Left lung (tissue), 14 donors: ENCODE measurements at regions of chr6 and their contacts with region 1.

Region 1: DNA sequence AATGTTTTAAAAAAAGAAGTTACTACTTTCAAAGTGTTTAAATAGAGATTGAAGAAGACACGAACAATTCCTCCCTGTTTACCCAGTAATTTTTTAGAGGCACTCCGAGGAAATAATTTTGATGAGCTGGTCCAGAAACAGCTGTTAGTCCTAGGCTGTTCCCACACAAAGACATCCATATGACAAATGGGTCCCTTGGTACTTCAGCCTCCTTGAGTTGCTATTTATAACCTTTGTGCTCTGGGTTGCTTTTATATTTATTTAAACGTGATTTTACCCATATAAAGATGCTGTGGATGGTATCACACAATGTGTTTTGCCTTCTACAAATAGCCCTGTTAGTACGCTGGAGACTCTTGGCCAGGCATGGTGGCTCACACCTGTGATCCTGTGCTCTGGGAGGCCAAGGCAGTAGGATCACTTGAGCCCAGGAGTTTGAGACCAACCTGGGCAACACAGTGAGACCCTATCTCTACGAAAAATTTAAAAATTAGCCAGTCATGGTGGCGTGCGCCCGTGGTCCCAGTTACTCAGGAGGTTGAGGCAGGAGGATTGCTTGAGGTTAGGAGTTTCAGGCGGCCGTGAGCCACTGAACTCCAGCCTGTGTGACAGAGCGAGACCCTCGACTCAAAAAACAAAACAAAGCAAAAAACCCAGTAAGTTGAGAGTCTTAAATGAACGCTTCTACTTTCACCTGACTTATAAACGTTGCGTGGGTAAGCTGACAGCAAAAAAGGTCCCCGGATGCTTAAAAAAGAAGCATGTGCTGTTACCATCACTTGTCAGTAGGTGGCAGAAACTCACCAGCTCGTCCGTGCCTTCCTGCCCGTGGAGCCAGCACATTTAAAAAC is 56.9 kb upstream of the ARMH2 start:
- DNase-seq: peak in 2 of 4 donors; percentile 58 to 78
- ATAC-seq: peak; percentile 88
- H3K4me3 ChIP-seq: no peak overlapping the region
- H3K27ac ChIP-seq: peak overlapping the region in 1 of 2 donors; percentile 92
- H3K4me1 ChIP-seq: peaks cover 5 to 47% of the 10 kb centered on the region in 2 donors
- H3K27me3 ChIP-seq: no peaks in the 10 kb centered on the region
- CTCF ChIP-seq: peak; percentile 75 to 82

Region 2: GRCh38 chr6:25017932-25018567 is 162.4 kb after region 1 on chr6:
- intact Hi-C with region 1: loop called in 1 of 2 experiments (anchors 10 kb)
- DNase-seq: peak in 3 of 4 donors; percentile 33 to 80 (median 79)
- ATAC-seq: peak; percentile 91
- H3K4me3 ChIP-seq: no peak overlapping the region
- H3K27ac ChIP-seq: peak overlapping the region; percentile 64 to 71
- H3K4me1 ChIP-seq: peaks cover 11 to 53% of the 10 kb centered on the region in 2 donors
- H3K27me3 ChIP-seq: no peaks in the 10 kb centered on the region
- CTCF ChIP-seq: peak; percentile 58 to 73

Region 3: DNA sequence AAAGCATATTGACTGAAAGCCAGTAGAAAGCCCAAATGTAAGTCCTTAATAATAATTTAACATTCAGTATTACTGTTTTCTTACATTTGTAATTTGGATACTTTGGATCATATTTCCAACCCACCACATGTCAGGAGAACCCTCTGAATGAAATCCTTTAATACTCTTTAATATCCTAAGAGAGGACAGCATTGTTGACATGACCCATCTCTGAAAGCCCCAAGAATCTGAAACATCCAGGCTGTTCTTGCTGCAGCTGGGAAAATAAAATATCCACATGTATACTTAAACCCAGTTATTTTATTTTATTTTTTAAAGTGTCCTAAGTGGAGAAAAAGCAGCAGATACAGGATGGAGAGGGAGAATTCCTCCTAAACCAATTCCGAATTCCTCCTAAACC is 211.0 kb after region 1 on chr6:
- intact Hi-C with region 1: loop called in 1 of 2 experiments (anchors 5 kb)
- DNase-seq: no peak
- ATAC-seq: no peak
- H3K4me3 ChIP-seq: no peak overlapping the region
- H3K27ac ChIP-seq: no peak overlapping the region
- H3K4me1 ChIP-seq: peaks cover 3 to 14% of the 10 kb centered on the region in 2 donors
- H3K27me3 ChIP-seq: no peaks in the 10 kb centered on the region
- CTCF ChIP-seq: no peak

Region 4: GRCh38 chr6:25103603-25104002 is 248.0 kb after region 1 on chr6:
- intact Hi-C with region 1: no loop called
- DNase-seq: no peak
- ATAC-seq: no peak
- H3K4me3 ChIP-seq: no peak overlapping the region
- H3K27ac ChIP-seq: no peak overlapping the region
- H3K4me1 ChIP-seq: no peaks in the 10 kb centered on the region
- H3K27me3 ChIP-seq: no peaks in the 10 kb centered on the region
- CTCF ChIP-seq: no peak